OCI-LY7 (cell line): ENCODE measurements at regions of chr5 and their contacts with region 1.

Region 1: DNA sequence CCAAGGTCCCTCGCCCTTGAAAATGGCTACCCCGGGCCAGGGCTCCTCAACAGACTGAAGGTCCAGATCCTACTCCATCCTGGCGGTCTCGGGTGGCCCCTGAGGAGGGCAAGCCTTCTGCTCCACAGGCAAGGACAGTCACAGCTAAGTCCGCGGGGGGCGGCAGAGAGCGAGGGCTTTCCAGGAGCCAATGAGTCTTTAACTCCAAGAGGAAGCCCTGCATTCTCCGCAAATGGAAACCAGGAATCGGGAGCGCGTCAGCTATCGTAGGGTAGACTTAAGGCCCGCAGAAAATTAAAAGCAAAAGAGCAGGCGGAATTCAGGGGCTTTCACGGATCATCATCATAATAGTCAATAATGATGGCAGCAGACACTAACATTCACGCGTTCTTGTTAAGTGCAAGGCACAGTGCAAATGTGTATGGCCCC is 87.8 kb upstream of the TNFAIP8 start:
- DNase-seq: peak; percentile 84
- H3K4me3 ChIP-seq: peak overlapping the region; percentile 84
- H3K27ac ChIP-seq: peak overlapping the region; percentile 60
- H3K4me1 ChIP-seq: peaks cover 45% of the 10 kb centered on the region
- CTCF ChIP-seq: 0 out of 2 replicates have a peak, but pooled peaks have one; percentile 34

Region 2: DNA sequence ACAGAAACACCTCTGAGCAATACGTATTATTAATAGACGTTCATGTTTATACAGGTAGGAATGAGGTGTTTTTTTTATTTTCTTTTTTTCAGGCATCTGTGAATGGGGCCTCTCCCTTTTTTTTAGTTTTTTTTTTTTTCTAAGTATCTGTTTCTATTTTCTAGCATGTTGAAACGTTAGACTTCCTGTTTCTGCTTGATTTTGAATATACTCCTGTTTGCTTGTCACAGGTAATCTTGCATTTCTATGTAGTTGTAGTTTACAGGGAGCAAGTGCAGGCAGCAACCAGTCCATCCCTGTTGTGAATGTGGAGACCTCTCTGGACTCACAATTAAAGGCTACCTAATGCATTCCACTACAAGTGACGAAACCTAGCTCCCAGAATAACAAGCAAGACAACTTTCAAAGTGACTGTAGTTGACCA is 65.0 kb after region 1 on chr5:
- CTCF ChIA-PET with region 1: interaction called, 3 read pairs
- POLR2A ChIA-PET with region 1: interaction called, 26 read pairs
- intact Hi-C with region 1: no loop called
- DNase-seq: peak; percentile 53
- H3K4me3 ChIP-seq: peak overlapping the region; percentile 70
- H3K27ac ChIP-seq: peak overlapping the region; percentile 99
- H3K4me1 ChIP-seq: peaks cover 77% of the 10 kb centered on the region
- CTCF ChIP-seq: no peak